Left cardiac atrium (tissue), 4 donors: ENCODE measurements at regions of chr9 and their contacts with region 1.

Region 1: GRCh38 chr9:18208154-18209059 is 265.5 kb upstream of the ADAMTSL1 start:
- DNase-seq: peak; percentile 41
- ATAC-seq: peak; percentile 43 to 59

Region 2: DNA sequence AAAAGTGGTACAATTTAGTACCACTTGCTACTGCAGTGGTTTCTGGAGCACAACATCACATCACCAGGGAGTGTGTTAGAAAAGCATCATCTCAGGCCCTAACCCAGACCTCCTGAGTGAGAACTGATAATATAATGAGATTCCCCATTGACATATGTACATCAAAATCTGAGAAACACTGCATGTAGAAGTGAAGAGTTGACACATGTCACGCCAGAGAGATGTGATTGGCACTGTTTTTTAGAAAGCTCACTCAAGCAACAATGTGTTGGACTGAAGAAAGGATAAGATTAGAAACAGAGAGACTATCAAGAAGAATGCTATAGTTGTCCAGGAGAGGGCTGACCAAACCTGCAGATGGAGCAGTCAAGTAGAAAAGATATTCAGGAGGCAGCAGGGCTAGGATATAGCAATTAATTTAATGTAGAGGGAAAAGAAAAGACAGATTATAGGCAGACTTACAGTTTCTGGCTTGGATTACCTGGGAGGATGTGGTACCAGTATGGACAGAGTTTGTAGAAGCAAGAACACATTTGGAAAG is 58.9 kb before region 1 on chr9:
- intact Hi-C with region 1: loop called in 1 of 2 experiments (anchors 10 kb)
- DNase-seq: no peak
- ATAC-seq: no peak